Prostate gland (tissue), 2 donors: ENCODE measurements at regions of chr10 and their contacts with region 1.

Region 1: GRCh38 chr10:73879296-73880173 is 5.2 kb upstream of the CAMK2G start:
- DNase-seq: peak; percentile 76
- H3K4me3 ChIP-seq: no peak overlapping the region
- H3K27ac ChIP-seq: no peak overlapping the region
- H3K4me1 ChIP-seq: no peaks in the 10 kb centered on the region
- H3K27me3 ChIP-seq: no peaks in the 10 kb centered on the region
- CTCF ChIP-seq: peak; percentile 76 to 97 (median 94)
- POLR2A ChIP-seq: no peak

Region 2: GRCh38 chr10:73848821-73849489 is 30.6 kb before region 1 on chr10:
- intact Hi-C with region 1: loop called (anchors 1 kb)
- DNase-seq: peak; percentile 72
- H3K4me3 ChIP-seq: no peak overlapping the region
- H3K27ac ChIP-seq: peak overlapping the region in 1 of 2 donors; percentile 53
- H3K4me1 ChIP-seq: no peaks in the 10 kb centered on the region
- H3K27me3 ChIP-seq: no peaks in the 10 kb centered on the region
- CTCF ChIP-seq: peak; percentile 97 to 99 (median 99)
- POLR2A ChIP-seq: no peak

Region 3: DNA sequence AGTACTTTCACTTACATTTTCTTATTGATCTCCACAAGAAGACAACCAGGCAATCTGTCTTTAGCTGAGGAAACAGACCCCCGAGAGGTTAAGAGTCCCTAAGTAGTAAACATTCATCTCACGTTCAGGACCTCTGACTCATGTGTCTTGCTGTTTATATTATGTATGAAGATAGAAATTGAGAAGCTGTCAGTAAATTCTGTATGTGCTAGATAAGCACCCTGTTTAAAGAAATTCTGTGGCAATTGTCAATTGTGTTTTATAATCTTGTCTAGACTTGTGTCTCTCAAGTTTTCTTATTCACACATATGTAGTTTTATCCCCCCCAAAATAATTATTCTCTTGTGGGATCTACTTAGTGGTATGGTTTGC is 286.0 kb after region 1 on chr10:
- intact Hi-C with region 1: no loop called
- DNase-seq: no peak
- H3K4me3 ChIP-seq: no peak overlapping the region
- H3K27ac ChIP-seq: no peak overlapping the region
- H3K4me1 ChIP-seq: no peaks in the 10 kb centered on the region
- H3K27me3 ChIP-seq: no peaks in the 10 kb centered on the region
- CTCF ChIP-seq: no peak
- POLR2A ChIP-seq: no peak